ENCODE measurements at regions of chr4 and their contacts with region 1.

Region 1: DNA sequence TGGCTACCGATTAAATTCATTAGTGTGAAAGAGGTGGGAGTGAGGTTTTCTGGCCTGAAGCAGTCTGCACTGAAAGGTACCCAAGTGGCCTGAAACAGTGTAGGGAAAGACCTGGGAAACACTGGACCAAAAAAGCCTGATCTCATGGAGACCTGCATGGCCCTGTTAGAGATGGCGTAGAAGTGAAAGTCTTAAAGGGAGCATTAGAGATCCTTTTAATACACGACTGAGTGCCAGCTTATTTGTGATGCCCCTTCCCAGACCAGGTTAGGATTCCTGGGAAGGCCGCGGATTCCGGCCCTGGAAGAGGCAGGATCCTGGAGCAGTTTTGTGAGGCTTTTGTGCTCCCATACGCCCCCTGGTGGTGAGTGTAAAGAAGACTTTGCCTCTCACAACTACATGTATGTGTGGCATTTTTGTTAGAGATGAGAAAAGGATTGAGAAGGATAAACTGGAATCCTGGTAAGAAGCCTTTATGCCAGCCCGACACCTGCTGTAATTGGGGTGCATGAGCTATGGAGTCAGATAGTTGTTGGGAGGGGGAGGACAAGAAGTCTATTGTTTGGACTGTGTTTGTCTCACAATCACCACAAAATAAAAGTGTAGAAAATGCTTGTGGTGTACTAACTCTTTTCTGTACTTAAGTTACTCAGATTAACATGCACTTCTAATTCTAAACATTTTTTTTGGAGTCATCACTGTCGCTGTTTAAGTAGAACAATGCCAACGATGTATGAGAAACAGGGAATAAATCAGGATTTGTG is 54.0 kb downstream of the JADE1 start:
- DNase-seq: peak; percentile 54 to 65 (median 60)
- H3K4me3 ChIP-seq: no peak overlapping the region
- H3K27ac ChIP-seq: no peak overlapping the region
- H3K4me1 ChIP-seq: peaks cover 7 to 46% (median 39%) of the 10 kb centered on the region in 4 experiments
- H3K27me3 ChIP-seq: no peaks in the 10 kb centered on the region

Region 2: GRCh38 chr4:128310266-128310697 is 553.2 kb before region 1 on chr4:
- CTCF ChIA-PET with region 1: no interaction called
- POLR2A ChIA-PET with region 1: no interaction called
- DNase-seq: no peak
- H3K4me3 ChIP-seq: no peak overlapping the region
- H3K27ac ChIP-seq: no peak overlapping the region
- H3K4me1 ChIP-seq: no peaks in the 10 kb centered on the region
- H3K27me3 ChIP-seq: no peaks in the 10 kb centered on the region

Region 3: GRCh38 chr4:128812442-128813235 is 50.9 kb before region 1 on chr4:
- CTCF ChIA-PET with region 1: interaction called, 14 read pairs
- POLR2A ChIA-PET with region 1: no interaction called
- DNase-seq: peak; percentile 66 to 88 (median 86)
- H3K4me3 ChIP-seq: peak overlapping the region; percentile 80 to 95 (median 89)
- H3K27ac ChIP-seq: peak overlapping the region; percentile 88 to 94
- H3K4me1 ChIP-seq: peaks cover 4 to 22% (median 17%) of the 10 kb centered on the region in 4 experiments
- H3K27me3 ChIP-seq: no peaks in the 10 kb centered on the region

Region 4: GRCh38 chr4:128840711-128841318 is 22.7 kb before region 1 on chr4:
- CTCF ChIA-PET with region 1: interaction called, 11 read pairs
- POLR2A ChIA-PET with region 1: no interaction called
- DNase-seq: no peak
- H3K4me3 ChIP-seq: no peak overlapping the region
- H3K27ac ChIP-seq: no peak overlapping the region
- H3K4me1 ChIP-seq: peaks cover 0 to 4% (median under 1%) of the 10 kb centered on the region in 4 experiments
- H3K27me3 ChIP-seq: no peaks in the 10 kb centered on the region

Region 5: DNA sequence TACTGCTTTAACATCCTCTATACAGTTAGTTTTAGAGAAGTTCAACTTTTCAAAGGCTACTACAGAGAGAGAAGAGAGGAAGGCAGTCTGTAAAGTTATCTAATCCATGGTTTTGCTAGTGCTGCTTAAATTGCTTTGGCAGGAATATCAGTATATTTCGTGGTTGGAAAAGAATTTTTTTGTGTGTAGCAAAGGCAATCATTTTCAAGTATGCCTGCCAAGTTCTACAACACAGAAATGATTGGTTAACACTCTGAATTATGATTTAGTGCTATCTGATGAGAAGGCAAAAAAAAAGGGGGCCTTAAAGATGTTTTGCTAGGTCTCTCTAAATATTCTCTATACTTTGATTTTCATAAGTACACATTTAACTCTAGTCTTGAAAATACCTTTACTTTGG is 79.1 kb after region 1 on chr4:
- CTCF ChIA-PET with region 1: no interaction called
- POLR2A ChIA-PET with region 1: no interaction called
- DNase-seq: no peak
- H3K4me3 ChIP-seq: no peak overlapping the region
- H3K27ac ChIP-seq: no peak overlapping the region
- H3K4me1 ChIP-seq: no peaks in the 10 kb centered on the region
- H3K27me3 ChIP-seq: no peaks in the 10 kb centered on the region

Measured in common myeloid progenitor, CD34-positive (primary cell).